Heart left ventricle (tissue), 16 donors: ENCODE measurements at regions of chr1 and their contacts with region 1.

Region 1: DNA sequence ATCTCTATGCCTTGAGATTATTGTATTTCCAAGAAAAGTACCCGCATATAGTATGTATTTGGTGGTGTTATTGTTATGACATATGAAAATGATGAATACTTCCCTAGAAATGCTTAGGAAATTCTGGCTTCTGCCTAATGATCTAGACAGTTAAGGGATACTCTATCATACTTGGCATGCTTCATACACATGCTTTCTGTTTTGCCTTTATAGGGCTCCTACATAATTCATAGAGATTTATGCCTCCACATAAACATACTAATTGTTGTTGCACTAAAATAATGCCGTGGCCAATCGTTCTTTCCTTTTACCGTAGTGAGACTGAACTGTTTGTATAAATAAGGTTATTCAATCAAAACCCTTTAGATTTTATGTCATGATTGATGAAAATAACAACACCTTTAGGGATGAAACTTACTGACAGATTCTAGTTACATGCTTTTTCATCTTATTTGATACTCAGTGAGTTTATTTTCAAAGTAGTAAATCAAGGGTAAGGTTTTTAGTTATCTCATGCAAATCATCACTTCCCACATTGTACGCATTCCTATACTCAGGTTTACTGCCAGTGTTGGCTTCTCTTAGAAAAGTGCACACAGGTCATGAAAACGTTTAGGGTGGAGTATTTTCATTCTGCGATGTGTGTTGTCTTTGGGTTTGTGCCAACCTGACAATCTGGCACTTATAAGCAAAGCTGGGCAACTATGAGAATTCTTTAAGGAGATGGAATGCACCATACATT is 40.5 kb upstream of the SCYL3 start:
- DNase-seq: no peak
- ATAC-seq: no peak
- H3K4me3 ChIP-seq: no peak overlapping the region
- H3K27ac ChIP-seq: no peak overlapping the region
- H3K4me1 ChIP-seq: peaks cover 0 to 8% (median 0%) of the 10 kb centered on the region in 12 donors
- H3K27me3 ChIP-seq: no peaks in the 10 kb centered on the region
- CTCF ChIP-seq: no peak
- POLR2A ChIP-seq: no peak

Region 2: GRCh38 chr1:170749959-170750358 is 815.8 kb after region 1 on chr1:
- intact Hi-C with region 1: loop called in 1 of 10 experiments (anchors 10 kb)
- DNase-seq: no peak
- ATAC-seq: no peak
- H3K4me3 ChIP-seq: no peak overlapping the region
- H3K27ac ChIP-seq: no peak overlapping the region
- H3K4me1 ChIP-seq: peaks cover 0 to 5% (median 0%) of the 10 kb centered on the region in 12 donors
- H3K27me3 ChIP-seq: no peaks in the 10 kb centered on the region
- CTCF ChIP-seq: no peak
- POLR2A ChIP-seq: no peak

Region 3: GRCh38 chr1:170776777-170777176 is 842.6 kb after region 1 on chr1:
- intact Hi-C with region 1: loop called in 2 of 10 experiments (anchors 10 kb)
- DNase-seq: peak in 2 of 5 donors; percentile 9 to 21
- ATAC-seq: peak in 2 of 4 donors; percentile 36 to 42
- H3K4me3 ChIP-seq: no peak overlapping the region
- H3K27ac ChIP-seq: peak overlapping the region in 4 of 12 donors; percentile 7 to 51 (median 39)
- H3K4me1 ChIP-seq: peaks cover 0 to 5% (median 0%) of the 10 kb centered on the region in 12 donors
- H3K27me3 ChIP-seq: no peaks in the 10 kb centered on the region
- CTCF ChIP-seq: no peak
- POLR2A ChIP-seq: no peak

Region 4: DNA sequence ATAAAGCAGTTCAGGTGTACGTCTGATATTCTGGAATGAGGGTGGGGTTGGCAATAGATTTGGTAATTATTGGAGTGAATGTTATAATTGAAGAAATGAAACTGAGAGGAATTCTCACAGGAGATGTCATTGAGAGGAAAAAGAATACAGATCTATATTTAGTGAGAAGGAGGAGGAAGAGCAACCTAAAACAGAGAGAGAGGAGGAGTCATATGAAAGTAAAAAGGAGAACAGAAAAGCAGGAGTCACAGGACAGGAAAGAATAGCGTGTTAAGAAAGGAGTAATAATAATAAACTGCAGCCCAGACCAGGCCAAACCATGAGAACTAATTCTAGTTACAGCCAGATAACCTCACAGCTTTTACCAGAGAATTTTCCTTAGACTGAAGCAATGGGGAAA is 938.5 kb after region 1 on chr1:
- intact Hi-C with region 1: loop called in 1 of 10 experiments (anchors 10 kb)
- DNase-seq: no peak
- ATAC-seq: no peak
- H3K4me3 ChIP-seq: no peak overlapping the region
- H3K27ac ChIP-seq: peak overlapping the region in 1 of 12 donors; percentile 53
- H3K4me1 ChIP-seq: peaks cover 0 to 18% (median 4%) of the 10 kb centered on the region in 12 donors
- H3K27me3 ChIP-seq: no peaks in the 10 kb centered on the region
- CTCF ChIP-seq: no peak
- POLR2A ChIP-seq: no peak

Region 5: DNA sequence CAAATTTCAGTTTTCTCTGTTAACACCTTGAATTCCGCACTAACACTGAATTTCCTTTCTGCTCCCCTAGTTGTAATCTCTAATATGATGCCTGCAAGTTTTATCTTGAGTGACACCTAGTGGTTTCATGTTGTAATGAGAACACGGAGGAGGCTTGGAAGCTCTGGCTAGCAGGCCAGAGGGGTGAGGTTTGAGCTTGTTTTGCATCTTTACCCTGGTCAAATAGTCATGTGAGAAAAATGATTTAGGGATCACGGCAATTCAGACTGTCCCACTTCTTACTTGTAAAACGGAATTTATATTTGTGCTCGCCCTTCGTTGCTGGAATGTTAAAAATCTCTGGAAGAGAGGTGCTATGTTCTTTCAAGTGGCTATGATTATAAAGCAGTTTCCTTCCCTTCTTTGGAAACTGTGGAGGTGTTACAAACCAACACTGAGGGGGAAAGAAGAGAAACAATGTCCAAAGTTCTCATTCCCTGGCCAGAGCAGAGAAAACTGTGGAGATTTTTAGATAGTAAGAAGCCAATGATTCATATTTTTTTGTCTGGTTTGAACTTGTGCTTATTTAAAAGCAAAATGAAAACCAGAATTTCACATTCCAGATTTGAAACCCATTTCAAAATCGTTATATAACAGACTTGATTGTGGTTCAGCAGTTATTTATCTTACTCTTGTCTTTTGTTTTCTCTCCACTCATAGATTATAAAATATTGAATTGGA is 995.8 kb after region 1 on chr1:
- intact Hi-C with region 1: loop called in 6 of 10 experiments (anchors 5 to 10 kb)
- DNase-seq: peak in 2 of 5 donors; percentile 16 to 21
- ATAC-seq: peak; percentile 86 to 95 (median 90)
- H3K4me3 ChIP-seq: peak overlapping the region in 2 of 12 donors; percentile 16 to 36
- H3K27ac ChIP-seq: peak overlapping the region in 8 of 12 donors; percentile 6 to 71 (median 42)
- H3K4me1 ChIP-seq: peaks cover 0 to 16% (median 5%) of the 10 kb centered on the region in 12 donors
- H3K27me3 ChIP-seq: no peaks in the 10 kb centered on the region
- CTCF ChIP-seq: peak; percentile 52 to 83 (median 71)
- POLR2A ChIP-seq: no peak